Left ventricle myocardium inferior (tissue), 1 donor: ENCODE measurements at regions of chr7 and their contacts with region 1.

Region 1: DNA sequence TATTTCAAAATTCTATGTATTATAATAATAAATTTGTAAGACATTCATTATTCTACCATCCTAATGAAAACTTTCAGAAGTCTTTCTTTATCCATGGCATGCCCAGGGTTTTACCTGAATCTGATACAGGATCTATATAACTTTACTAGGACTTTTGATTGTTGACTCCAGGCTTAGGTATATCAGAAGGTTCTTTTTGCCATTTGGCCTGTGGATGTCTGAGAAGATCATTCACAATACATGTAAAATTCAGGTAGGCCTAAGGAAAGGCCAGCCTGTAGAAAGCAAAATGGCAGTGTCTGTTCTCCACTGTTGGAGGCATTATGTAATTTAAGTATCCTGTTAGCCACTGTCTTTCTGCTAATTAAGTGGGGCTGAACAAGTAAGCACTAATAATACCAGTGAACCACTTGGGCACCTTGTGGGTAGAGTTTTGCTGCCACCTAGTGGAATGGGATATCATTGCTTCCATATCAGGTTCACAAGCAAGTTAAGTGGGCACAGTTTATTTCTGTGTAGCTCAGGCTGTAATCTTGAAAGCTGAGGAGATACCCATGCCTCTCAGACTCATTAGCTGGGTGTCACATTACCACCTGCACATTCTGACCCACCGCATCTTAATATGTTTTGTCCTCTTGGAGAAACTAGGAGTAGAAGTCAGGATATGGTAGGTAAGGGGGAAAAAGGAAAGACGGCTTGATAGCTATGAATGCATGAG is 105.5 kb downstream of the SEPTIN7 start:
- DNase-seq: no peak
- H3K4me3 ChIP-seq: no peak overlapping the region
- H3K27ac ChIP-seq: peak overlapping the region; percentile 16
- H3K4me1 ChIP-seq: peaks cover 23% of the 10 kb centered on the region
- H3K27me3 ChIP-seq: no peaks in the 10 kb centered on the region
- CTCF ChIP-seq: peak; percentile 96

Region 2: GRCh38 chr7:35707422-35707821 is 198.9 kb before region 1 on chr7:
- intact Hi-C with region 1: loop called (anchors 2 kb)
- DNase-seq: no peak
- H3K4me3 ChIP-seq: no peak overlapping the region
- H3K27ac ChIP-seq: no peak overlapping the region
- H3K4me1 ChIP-seq: peaks cover 12% of the 10 kb centered on the region
- H3K27me3 ChIP-seq: no peaks in the 10 kb centered on the region
- CTCF ChIP-seq: no peak

Region 3: DNA sequence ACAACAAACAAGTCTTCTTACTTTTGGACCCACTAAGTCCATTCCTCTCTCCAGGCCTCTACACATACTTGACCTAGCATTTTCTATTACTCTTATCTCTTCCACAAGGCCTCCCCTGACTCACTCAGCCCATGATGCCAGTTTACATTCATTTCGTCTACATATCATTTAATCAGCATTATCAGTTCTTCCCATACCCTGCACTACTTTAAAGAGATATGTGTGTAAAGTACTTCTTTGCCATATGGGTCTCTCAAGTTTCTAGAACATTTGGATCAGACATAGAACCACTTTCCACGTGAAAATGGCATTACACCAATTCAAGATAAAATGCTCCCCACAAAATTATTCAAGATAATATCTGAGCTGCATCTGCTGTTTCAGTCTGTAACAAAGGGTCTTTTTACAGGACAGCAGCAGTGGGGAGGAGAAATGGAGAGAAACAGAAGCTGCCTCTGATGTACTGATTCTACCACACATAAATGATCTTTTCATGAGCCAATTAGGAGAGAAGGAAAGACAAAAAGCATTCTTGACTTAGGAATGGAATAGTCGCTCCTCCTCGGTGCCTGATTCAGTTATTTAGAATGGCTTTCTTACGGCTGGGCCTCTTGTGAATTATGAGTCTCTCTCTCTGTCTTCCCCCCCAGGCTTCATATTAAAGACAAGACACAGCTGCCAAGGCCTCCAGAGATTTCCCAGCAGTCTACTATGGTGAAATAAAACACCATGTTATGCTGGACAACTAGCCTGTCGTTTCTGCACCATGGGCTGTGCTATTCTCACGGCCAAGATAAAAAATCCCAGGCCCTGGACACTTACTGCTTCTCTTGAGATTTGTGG is 152.4 kb before region 1 on chr7:
- intact Hi-C with region 1: no loop called
- DNase-seq: peak; percentile 52
- H3K4me3 ChIP-seq: no peak overlapping the region
- H3K27ac ChIP-seq: peak overlapping the region; percentile 78
- H3K4me1 ChIP-seq: peaks cover 47% of the 10 kb centered on the region
- H3K27me3 ChIP-seq: no peaks in the 10 kb centered on the region
- CTCF ChIP-seq: no peak